CD8-positive, alpha-beta memory T cell (primary cell): ENCODE measurements at regions of chr5 and their contacts with region 1.

Region 1: DNA sequence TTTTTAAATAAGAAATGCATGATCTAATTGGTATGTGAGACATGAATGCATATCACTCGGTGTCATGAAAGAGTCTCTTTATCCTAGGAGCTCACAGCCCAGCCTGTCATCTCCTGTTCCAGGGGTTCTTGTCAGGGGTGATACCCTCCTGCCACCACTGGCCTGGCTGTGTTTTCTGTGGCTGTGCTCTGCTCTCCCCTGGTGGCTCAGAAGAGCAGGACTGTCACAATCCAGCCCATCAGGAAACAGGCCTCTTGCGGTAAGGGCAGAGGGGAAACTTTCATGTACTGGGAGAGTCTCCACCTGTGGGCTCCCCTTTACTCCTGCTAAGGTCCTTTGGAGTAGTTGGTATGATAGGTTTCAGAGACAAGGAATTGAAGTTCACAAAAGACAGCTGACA is 240.2 kb upstream of the GLRA1 start:
- DNase-seq: no peak
- H3K4me3 ChIP-seq: no peak overlapping the region
- H3K4me3 Mint-ChIP-seq: no peak overlapping the region
- H3K27ac ChIP-seq: no peak overlapping the region
- H3K27ac Mint-ChIP-seq: no peak overlapping the region
- H3K4me1 ChIP-seq: peaks cover 12% of the 10 kb centered on the region
- H3K4me1 Mint-ChIP-seq: peaks cover 11 to 13% (median 11%) of the 10 kb centered on the region in 3 donors
- H3K27me3 ChIP-seq: no peaks in the 10 kb centered on the region
- H3K27me3 Mint-ChIP-seq: no peaks in the 10 kb centered on the region

Region 2: GRCh38 chr5:152142840-152143469 is 21.9 kb before region 1 on chr5:
- CTCF ChIA-PET with region 1: interaction called, 12 read pairs
- POLR2A ChIA-PET with region 1: no interaction called
- DNase-seq: peak; percentile 30 to 65 (median 43)
- H3K4me3 ChIP-seq: no peak overlapping the region
- H3K4me3 Mint-ChIP-seq: no peak overlapping the region
- H3K27ac ChIP-seq: no peak overlapping the region
- H3K27ac Mint-ChIP-seq: peak overlapping the region in 1 of 8 donors; percentile 39
- H3K4me1 ChIP-seq: no peaks in the 10 kb centered on the region
- H3K4me1 Mint-ChIP-seq: no peaks in the 10 kb centered on the region
- H3K27me3 ChIP-seq: no peaks in the 10 kb centered on the region
- H3K27me3 Mint-ChIP-seq: peaks cover 0 to 4% of the 10 kb centered on the region in 2 donors